ENCODE measurements at regions of chrX and their contacts with region 1.

Region 1: GRCh38 chrX:48574270-48575266 is at the start of gene RBM3:
- DNase-seq: peak; percentile 77
- ATAC-seq: peak; percentile 96
- H3K4me3 ChIP-seq: peak within 1 kb of the TSS; percentile 84 to 90
- H3K27ac ChIP-seq: peak within 1 kb of the TSS; percentile 95
- H3K4me1 ChIP-seq: peaks cover 5 to 14% of the 10 kb centered on the region in 2 experiments
- H3K27me3 ChIP-seq: no peaks in the 10 kb centered on the region
- CTCF ChIP-seq: peak in 2 of 3 experiments; percentile 23 to 26; a peak in 2 of 6 replicates
- POLR2A ChIP-seq: peak; percentile 34
- RAD21 ChIP-seq: no peak
- total RNA-seq, gene RBM3: 233 TPM

Region 2: GRCh38 chrX:48539345-48540027 is 35.1 kb before region 1 on chrX and contains the start of gene TBC1D25:
- CTCF ChIA-PET with region 1: interaction called, 3 read pairs
- POLR2A ChIA-PET with region 1: interaction called, 6 read pairs
- RAD21 ChIA-PET with region 1: interaction called in 1 of 2 experiments, 3 read pairs
- intact Hi-C with region 1: loop called (anchors 2 kb)
- DNase-seq: peak; percentile 96
- ATAC-seq: peak; percentile 86
- H3K4me3 ChIP-seq: peak within 1 kb of the TSS; percentile 56 to 63
- H3K27ac ChIP-seq: peak within 1 kb of the TSS; percentile 67
- H3K4me1 ChIP-seq: peaks cover 0 to 15% of the 10 kb centered on the region in 2 experiments; a peak in 3 of 4 replicates
- H3K27me3 ChIP-seq: no peaks in the 10 kb centered on the region
- CTCF ChIP-seq: peak in 2 of 3 experiments; percentile 40 to 42; a peak in 4 of 6 replicates
- POLR2A ChIP-seq: no peak
- RAD21 ChIP-seq: no peak
- total RNA-seq, gene TBC1D25: 10.5 TPM

Region 3: DNA sequence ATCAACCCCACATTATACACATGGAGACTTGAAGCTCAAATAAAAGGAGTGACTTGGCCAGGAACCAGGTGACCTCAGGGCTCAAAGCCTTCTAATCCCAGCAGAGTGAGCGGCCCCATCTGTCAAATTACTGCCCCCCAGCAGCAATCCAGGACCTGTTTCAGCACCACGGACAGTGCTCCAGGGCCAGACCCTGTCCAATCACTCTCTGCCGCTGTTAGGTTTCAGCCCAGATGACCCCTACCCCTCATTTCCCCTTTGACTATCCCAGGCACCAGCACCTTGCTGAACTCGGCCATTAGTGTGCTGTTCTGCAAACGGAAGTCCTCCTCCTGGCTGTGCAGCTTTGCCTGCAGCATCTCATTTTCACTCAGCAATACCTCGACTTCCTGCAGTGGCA is 422.4 kb after region 1 on chrX:
- CTCF ChIA-PET with region 1: no interaction called
- POLR2A ChIA-PET with region 1: no interaction called
- RAD21 ChIA-PET with region 1: no interaction called
- intact Hi-C with region 1: no loop called
- DNase-seq: no peak
- ATAC-seq: no peak
- H3K4me3 ChIP-seq: no peak overlapping the region
- H3K27ac ChIP-seq: no peak overlapping the region
- H3K4me1 ChIP-seq: peaks cover 0 to 7% of the 10 kb centered on the region in 2 experiments; a peak in 1 of 4 replicates
- H3K27me3 ChIP-seq: no peaks in the 10 kb centered on the region
- CTCF ChIP-seq: no peak
- POLR2A ChIP-seq: no peak
- RAD21 ChIP-seq: no peak

Measured in HCT116 (cell line).